Activated B cell treated with CpG ODN at 0.5 μM for 24 hours (primary cell): ENCODE measurements at regions of chr4 and their contacts with region 1.

Region 1: GRCh38 chr4:87422104-87423052 is at the start of gene NUDT9:
- DNase-seq: peak; percentile 80
- ATAC-seq: peak; percentile 86
- H3K4me3 Mint-ChIP-seq: peak within 1 kb of the TSS; percentile 100
- H3K27ac Mint-ChIP-seq: peak within 1 kb of the TSS; percentile 99
- H3K4me1 Mint-ChIP-seq: peaks cover 40% of the 10 kb centered on the region
- H3K27me3 Mint-ChIP-seq: no peaks in the 10 kb centered on the region
- CTCF ChIP-seq: no peak
- total RNA-seq, gene NUDT9: 18.5 and 21.1 TPM in 2 replicates

Region 2: DNA sequence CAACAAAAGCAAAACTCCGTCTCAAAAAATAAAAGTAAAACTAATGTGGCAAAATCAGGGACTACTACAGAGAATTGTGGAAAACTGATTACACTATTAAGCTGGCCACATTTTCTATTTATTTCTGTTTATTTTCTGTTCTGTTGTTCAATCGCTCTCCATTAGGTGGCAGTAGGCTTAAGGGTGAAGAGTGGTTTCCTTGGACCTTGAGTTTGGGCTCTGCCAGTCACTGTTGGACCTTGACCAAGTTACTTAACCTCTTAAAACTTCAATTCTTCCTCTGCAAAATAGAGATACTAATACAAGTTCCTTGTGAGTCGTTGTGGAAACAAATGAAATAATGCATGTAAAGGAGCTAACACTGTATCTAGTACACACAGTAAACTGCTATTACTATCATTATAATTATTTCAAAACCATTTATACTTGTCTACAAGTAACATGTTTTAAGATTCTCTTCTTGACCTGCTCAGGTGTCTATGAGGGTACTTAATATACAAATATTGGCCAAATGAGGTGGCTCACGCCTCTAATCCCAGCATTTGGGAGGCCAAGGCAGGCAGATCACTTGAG is 46.6 kb before region 1 on chr4:
- CTCF ChIA-PET with region 1: interaction called, 11 read pairs
- POLR2A ChIA-PET with region 1: interaction called, 6 read pairs
- intact Hi-C with region 1: loop called (anchors 10 kb)
- DNase-seq: no peak
- ATAC-seq: peak; percentile 73
- H3K4me3 Mint-ChIP-seq: no peak overlapping the region
- H3K27ac Mint-ChIP-seq: no peak overlapping the region
- H3K4me1 Mint-ChIP-seq: peaks cover 7% of the 10 kb centered on the region
- H3K27me3 Mint-ChIP-seq: no peaks in the 10 kb centered on the region
- CTCF ChIP-seq: no peak

Region 3: DNA sequence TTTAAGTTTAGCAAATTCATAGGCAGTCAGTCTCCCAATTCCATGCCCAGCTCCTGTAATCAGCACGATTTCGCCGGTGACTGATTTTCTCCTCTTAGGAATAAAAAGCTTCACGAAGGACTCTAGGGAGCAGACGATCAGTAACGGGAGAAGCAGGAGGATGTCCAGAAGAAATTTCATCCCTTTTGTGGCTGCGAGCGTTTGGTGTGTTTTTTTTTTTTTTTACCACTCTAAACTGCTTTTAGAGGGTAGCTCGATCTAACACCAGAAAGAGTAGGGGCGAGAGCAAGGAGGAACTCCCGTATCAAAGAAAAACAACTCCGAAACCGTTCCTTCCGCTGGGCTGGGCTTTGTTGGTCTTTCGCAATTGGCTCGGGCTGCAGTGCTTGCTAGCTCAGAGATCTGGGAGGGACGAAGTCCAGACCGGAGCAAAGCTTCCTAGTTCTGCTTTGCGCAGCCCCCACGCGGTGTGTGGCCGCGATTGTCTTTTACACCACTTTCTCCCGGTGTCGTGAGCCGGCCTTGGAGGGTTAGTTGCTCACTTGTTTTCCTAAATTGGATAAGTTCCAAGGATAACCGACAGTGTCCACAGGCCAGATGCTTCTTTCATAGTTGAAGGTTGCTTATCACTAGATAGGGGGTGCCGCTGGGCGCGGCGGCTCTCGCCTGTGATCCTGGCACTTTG is 31.3 kb before region 1 on chr4 and contains the start of gene HSD17B11:
- CTCF ChIA-PET with region 1: interaction called, 3 read pairs
- POLR2A ChIA-PET with region 1: interaction called, 133 read pairs
- intact Hi-C with region 1: loop called (anchors 1 kb)
- DNase-seq: peak; percentile 70
- ATAC-seq: peak; percentile 99
- H3K4me3 Mint-ChIP-seq: peak within 1 kb of the TSS; percentile 97
- H3K27ac Mint-ChIP-seq: peak within 1 kb of the TSS; percentile 96
- H3K4me1 Mint-ChIP-seq: peaks cover 48% of the 10 kb centered on the region
- H3K27me3 Mint-ChIP-seq: no peaks in the 10 kb centered on the region
- CTCF ChIP-seq: no peak
- total RNA-seq, gene HSD17B11: 26.2 and 28.4 TPM in 2 replicates

Region 4: DNA sequence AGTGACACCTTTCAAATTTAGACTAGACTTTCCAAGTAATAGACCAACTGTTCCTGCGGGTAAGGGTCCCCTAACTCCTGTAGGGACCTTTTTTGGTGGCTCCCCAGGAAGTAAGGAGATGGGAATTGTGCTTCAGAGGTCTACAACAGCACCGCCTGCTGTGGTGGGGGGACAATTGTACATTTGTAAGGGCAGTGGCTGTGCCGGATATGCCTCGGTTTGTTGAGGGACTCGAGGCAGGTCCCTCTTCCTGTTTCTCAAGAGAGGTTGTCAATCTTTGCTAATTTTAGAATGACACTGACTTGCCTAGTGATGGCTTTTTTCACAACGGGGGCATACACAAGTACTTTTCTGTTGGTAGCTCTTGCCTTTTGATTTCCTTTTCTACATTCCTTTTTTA is 15.9 kb before region 1 on chr4:
- CTCF ChIA-PET with region 1: no interaction called
- POLR2A ChIA-PET with region 1: interaction called, 5 read pairs
- intact Hi-C with region 1: loop called (anchors 1 kb)
- DNase-seq: no peak
- ATAC-seq: peak; percentile 58
- H3K4me3 Mint-ChIP-seq: peak overlapping the region; percentile 66
- H3K27ac Mint-ChIP-seq: peak overlapping the region; percentile 54
- H3K4me1 Mint-ChIP-seq: peaks cover 18% of the 10 kb centered on the region
- H3K27me3 Mint-ChIP-seq: peaks cover 4% of the 10 kb centered on the region
- CTCF ChIP-seq: no peak

Region 5: DNA sequence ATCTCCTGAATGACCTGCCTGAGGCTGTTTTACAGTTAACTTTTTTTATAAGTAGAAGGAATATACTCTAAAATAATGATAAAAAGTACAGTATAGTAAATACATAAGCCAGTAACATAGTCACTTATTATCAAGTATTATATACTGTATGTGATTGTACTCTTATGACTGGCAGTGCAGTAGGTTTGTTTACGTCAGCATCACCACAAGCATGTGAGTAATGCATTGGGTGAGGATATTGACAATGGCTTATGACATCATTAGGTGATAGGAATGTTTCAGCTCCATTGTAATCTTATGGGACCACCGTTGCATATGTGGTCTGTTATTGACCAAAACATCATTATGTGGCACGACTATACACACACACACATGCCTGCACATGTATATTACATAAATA is 20.5 kb after region 1 on chr4:
- CTCF ChIA-PET with region 1: no interaction called
- POLR2A ChIA-PET with region 1: no interaction called
- intact Hi-C with region 1: loop called (anchors 2 kb)
- DNase-seq: no peak
- ATAC-seq: no peak
- H3K4me3 Mint-ChIP-seq: no peak overlapping the region
- H3K27ac Mint-ChIP-seq: no peak overlapping the region
- H3K4me1 Mint-ChIP-seq: no peaks in the 10 kb centered on the region
- H3K27me3 Mint-ChIP-seq: no peaks in the 10 kb centered on the region
- CTCF ChIP-seq: no peak

Region 6: DNA sequence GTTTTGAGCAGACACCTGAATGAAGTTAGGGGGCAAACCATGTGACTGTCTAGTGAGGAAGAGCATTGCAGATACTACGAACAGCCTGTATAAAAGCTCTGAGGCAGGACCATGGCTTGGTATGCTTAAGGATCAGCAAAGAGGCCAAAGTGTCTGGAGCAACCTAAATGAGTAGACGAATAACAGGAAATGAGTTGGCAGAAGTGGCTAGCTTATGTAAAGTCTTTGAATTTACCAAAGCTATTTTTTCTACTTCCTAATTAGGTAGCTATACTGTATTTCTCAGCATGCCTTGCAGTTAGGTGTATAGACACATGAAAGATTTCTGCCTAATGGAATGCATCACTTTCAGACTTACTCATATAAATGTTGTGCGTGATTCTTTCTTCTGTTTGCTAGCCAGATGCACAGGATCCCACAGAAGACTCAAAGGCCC is 1894.6 kb after region 1 on chr4:
- CTCF ChIA-PET with region 1: no interaction called
- POLR2A ChIA-PET with region 1: no interaction called
- intact Hi-C with region 1: loop called (anchors 10 kb)
- DNase-seq: no peak
- ATAC-seq: peak; percentile 76
- H3K4me3 Mint-ChIP-seq: peak overlapping the region; percentile 59
- H3K27ac Mint-ChIP-seq: peak overlapping the region; percentile 74
- H3K4me1 Mint-ChIP-seq: peaks cover 34% of the 10 kb centered on the region
- H3K27me3 Mint-ChIP-seq: no peaks in the 10 kb centered on the region
- CTCF ChIP-seq: no peak